ENCODE measurements at regions of chr21 and their contacts with region 1.

Region 1: GRCh38 chr21:45973659-45974072 is 7.9 kb upstream of the COL6A1 start:
- DNase-seq: no peak
- H3K4me3 ChIP-seq: peak overlapping the region; percentile 48
- H3K27ac ChIP-seq: peak overlapping the region; percentile 97
- H3K27me3 ChIP-seq: no peaks in the 10 kb centered on the region
- CTCF ChIP-seq: peak; percentile 81

Region 2: DNA sequence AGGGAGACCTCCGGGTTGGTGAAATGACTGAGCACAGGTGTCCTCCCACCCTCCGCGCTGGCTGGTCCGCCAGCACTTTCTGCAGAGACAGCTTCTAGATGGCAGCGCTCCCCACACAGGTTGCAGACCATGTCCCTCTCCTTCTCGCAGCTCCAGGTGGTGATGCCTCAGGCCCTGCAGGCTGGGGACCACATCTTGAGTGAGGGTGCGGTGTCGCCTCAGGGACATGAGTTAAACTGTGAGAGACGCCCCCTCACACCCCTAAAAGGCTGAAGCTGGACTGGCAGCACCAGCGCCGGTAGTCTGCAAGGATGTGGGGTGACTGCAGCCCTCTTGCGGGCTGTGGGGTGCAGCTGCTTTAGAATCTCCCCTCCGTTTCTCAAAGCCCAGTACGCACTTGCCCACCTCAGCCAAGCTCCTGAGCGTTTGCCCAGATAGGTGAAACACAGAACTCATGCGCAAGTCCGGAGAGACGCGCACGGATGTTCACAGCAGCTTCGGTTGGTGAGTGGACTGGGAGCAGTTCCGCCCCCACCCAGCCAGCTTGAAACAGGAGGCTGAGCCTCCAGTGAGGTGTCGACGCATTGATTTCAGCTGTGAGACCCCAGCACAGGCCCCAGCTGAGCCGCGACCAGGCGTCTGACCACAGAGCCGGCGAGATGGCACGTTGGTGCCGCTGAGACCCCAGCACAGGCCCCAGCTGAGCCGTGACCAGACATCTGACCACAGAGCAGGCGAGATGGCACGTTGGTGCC is 36.5 kb after region 1 on chr21:
- CTCF ChIA-PET with region 1: no interaction called
- POLR2A ChIA-PET with region 1: no interaction called
- DNase-seq: no peak
- H3K4me3 ChIP-seq: no peak overlapping the region
- H3K27ac ChIP-seq: no peak overlapping the region
- H3K27me3 ChIP-seq: no peaks in the 10 kb centered on the region
- CTCF ChIP-seq: no peak

Region 3: DNA sequence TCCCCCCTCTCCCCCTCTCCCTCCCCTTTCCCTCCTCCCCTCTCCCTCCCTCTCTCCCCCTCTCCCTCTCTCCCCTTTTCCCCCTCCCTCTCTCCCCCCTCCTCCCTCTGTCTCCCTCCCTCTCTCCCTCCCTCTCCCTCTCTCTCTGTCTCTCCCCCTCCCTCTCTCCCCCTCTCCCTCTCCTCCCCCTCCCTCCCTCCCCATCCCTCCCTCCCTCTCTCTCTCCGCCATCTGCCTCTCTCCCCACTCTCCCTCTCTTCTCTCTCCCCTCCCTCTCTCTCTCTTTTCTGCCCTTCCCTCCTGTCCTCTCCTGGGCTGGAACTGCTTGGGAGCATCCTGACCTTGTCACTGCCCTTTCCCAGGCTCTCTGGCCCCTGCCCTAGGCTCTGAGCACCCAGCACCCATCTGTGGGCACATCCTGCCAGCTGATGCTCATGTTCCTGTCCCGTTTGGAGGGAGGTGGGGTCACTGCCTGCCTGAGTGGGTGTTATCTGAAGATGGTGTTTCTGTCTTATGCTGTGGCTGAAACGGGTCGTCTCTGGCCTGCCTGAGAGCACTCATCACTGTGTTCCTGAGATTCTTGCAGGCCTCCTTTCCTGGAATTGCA is 170.9 kb after region 1 on chr21:
- CTCF ChIA-PET with region 1: interaction called, 20 read pairs
- POLR2A ChIA-PET with region 1: interaction called, 15 read pairs
- DNase-seq: no peak
- H3K4me3 ChIP-seq: no peak overlapping the region
- H3K27ac ChIP-seq: no peak overlapping the region
- H3K27me3 ChIP-seq: peaks cover 3% of the 10 kb centered on the region
- CTCF ChIP-seq: no peak

Region 4: DNA sequence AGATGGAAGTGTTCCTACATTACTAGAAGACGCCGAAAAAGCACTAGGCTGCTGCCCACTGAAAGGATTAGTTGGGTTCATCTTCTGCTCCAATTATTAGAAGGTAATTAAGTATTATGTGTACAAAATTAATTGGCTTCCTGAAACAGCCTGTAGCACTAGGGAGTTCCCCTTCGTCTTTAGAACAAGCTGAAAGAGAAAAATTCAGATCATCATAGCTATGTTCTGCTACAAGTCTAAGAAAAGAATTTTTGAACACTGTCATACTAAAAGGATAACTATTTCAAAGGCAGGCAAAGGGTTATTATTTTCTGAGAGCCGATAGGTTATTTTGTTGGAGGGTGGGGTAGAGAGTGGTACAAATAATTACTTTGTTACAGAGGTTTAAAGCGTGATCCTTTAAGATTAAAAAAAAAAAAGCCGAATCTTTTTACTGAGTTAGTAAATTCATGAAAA is 311.6 kb after region 1 on chr21 and contains the start of gene MCM3AP:
- CTCF ChIA-PET with region 1: interaction called, 11 read pairs
- POLR2A ChIA-PET with region 1: no interaction called
- DNase-seq: no peak
- H3K4me3 ChIP-seq: peak within 1 kb of the TSS; percentile 78
- H3K27ac ChIP-seq: peak within 1 kb of the TSS; percentile 83
- H3K27me3 ChIP-seq: no peaks in the 10 kb centered on the region
- CTCF ChIP-seq: no peak
- polyA plus RNA-seq, gene MCM3AP: 41.5 and 43.7 TPM in 2 replicates

Measured in AG04450 (cell line).